ENCODE measurements at regions of chr15 and their contacts with region 1.

Region 1: DNA sequence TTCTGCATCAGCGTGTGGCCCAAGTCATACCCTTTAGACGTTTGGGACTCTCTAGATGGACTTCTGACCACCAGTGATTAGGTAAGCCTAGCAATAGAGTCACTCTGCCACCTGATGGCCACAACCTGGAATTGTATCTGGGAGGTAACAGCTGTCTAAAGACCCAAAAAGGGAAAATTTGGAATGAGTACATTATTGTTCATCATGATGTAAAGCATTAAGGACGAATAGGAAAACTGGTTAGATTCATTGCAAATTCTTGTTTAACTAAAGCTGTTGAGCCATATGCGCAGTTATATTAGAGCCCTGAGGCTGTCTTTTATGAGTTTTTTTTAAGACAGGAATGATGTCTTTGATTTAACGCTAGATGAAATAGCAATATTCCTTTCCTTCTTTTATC is 63.6 kb downstream of the FAM81A start:
- DNase-seq: peak; percentile 76
- H3K4me3 ChIP-seq: no peak overlapping the region
- H3K27ac ChIP-seq: no peak overlapping the region
- H3K4me1 ChIP-seq: no peaks in the 10 kb centered on the region
- H3K27me3 ChIP-seq: no peaks in the 10 kb centered on the region
- CTCF ChIP-seq: peak; percentile 83

Region 2: GRCh38 chr15:58980351-58980939 is 521.2 kb before region 1 on chr15:
- CTCF ChIA-PET with region 1: no interaction called
- dilution Hi-C with region 1: no loop called
- in situ Hi-C with region 1: loop called (anchors 10 kb)
- intact Hi-C with region 1: loop called (anchors 2 kb)
- DNase-seq: no peak
- H3K4me3 ChIP-seq: no peak overlapping the region
- H3K27ac ChIP-seq: no peak overlapping the region
- H3K4me1 ChIP-seq: no peaks in the 10 kb centered on the region
- H3K27me3 ChIP-seq: no peaks in the 10 kb centered on the region
- CTCF ChIP-seq: peak; percentile 32 to 50

Region 3: GRCh38 chr15:59583088-59583487 is 81.5 kb after region 1 on chr15:
- CTCF ChIA-PET with region 1: no interaction called
- dilution Hi-C with region 1: no loop called
- in situ Hi-C with region 1: no loop called
- intact Hi-C with region 1: no loop called
- DNase-seq: no peak
- H3K4me3 ChIP-seq: no peak overlapping the region
- H3K27ac ChIP-seq: no peak overlapping the region
- H3K4me1 ChIP-seq: peaks cover 10% of the 10 kb centered on the region
- H3K27me3 ChIP-seq: no peaks in the 10 kb centered on the region
- CTCF ChIP-seq: no peak

Measured in mammary epithelial cell (primary cell).